HepG2 (cell line): ENCODE measurements at regions of chr16 and their contacts with region 1.

Region 1: DNA sequence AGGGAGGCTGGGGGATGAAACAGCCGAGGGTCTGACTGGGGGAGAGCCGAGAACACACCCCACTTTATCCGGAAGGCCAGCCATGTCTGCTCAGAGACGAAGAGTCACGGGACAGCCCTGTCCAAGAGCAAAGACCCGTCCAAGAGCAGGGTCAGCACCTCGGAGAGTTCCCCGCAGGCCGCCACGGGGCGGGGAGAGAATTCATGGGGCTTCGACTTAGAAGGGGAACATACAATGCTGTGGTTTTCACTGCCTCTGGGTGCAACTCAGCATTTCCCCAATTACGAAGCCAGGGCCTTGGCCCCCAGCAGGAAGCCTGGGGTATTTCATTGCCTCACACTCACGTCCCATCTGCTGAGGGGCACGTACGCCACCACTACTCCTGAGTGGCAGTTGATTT is 59.3 kb downstream of the JPH3 start:
- DNase-seq: peak; percentile 44
- ATAC-seq: peak; percentile 76
- H3K4me3 ChIP-seq: no peak overlapping the region
- H3K27ac ChIP-seq: no peak overlapping the region
- H3K4me1 ChIP-seq: no peaks in the 10 kb centered on the region
- H3K27me3 ChIP-seq: peaks cover 14 to 84% of the 10 kb centered on the region in 2 experiments
- CTCF ChIP-seq: no peak
- EP300 ChIP-seq: no peak
- POLR2A ChIP-seq: no peak
- RAD21 ChIP-seq: no peak

Region 2: GRCh38 chr16:87608400-87608985 is 53.1 kb before region 1 on chr16:
- CTCF ChIA-PET with region 1: no interaction called
- POLR2A ChIA-PET with region 1: no interaction called
- in situ Hi-C with region 1: no loop called
- intact Hi-C with region 1: loop called (anchors 10 kb)
- DNase-seq: peak; percentile 48
- ATAC-seq: peak; percentile 74
- H3K4me3 ChIP-seq: no peak overlapping the region
- H3K27ac ChIP-seq: no peak overlapping the region
- H3K4me1 ChIP-seq: no peaks in the 10 kb centered on the region
- H3K27me3 ChIP-seq: peaks cover 16 to 73% of the 10 kb centered on the region in 2 experiments
- CTCF ChIP-seq: no peak
- EP300 ChIP-seq: no peak
- POLR2A ChIP-seq: no peak
- RAD21 ChIP-seq: no peak

Region 3: DNA sequence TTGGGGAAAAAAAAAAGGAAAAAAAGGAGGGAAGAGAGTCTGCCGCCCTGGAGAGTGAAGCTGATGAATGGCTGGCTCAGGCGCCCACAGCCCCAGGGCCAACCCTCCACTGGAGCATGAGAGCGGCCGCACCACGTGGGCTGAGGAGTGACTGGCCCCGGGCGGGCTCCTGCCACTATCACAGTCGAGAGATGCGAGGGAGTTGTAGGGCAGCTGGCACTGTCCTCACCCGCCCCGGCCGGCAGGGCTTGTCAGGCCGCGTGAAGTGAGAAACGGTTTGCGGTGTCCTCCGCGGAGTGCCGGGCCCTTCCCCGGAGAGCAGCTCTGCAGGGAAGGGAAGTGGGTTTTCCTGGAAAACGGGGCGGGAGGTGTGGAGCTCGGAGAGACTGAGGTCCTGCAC is 13.3 kb before region 1 on chr16:
- CTCF ChIA-PET with region 1: no interaction called
- POLR2A ChIA-PET with region 1: no interaction called
- in situ Hi-C with region 1: no loop called
- intact Hi-C with region 1: no loop called
- DNase-seq: no peak
- ATAC-seq: peak; percentile 16
- H3K4me3 ChIP-seq: no peak overlapping the region
- H3K27ac ChIP-seq: no peak overlapping the region
- H3K4me1 ChIP-seq: no peaks in the 10 kb centered on the region
- H3K27me3 ChIP-seq: peaks cover 30 to 79% of the 10 kb centered on the region in 2 experiments
- CTCF ChIP-seq: no peak
- EP300 ChIP-seq: no peak
- POLR2A ChIP-seq: no peak
- RAD21 ChIP-seq: no peak

Region 4: GRCh38 chr16:87681981-87682570 is 20.5 kb after region 1 on chr16:
- CTCF ChIA-PET with region 1: no interaction called
- POLR2A ChIA-PET with region 1: no interaction called
- in situ Hi-C with region 1: no loop called
- intact Hi-C with region 1: no loop called
- DNase-seq: peak; percentile 42
- ATAC-seq: peak; percentile 66
- H3K4me3 ChIP-seq: no peak overlapping the region
- H3K27ac ChIP-seq: no peak overlapping the region
- H3K4me1 ChIP-seq: peaks cover 6% of the 10 kb centered on the region
- H3K27me3 ChIP-seq: peaks cover 18 to 82% of the 10 kb centered on the region in 2 experiments
- CTCF ChIP-seq: peak; percentile 47
- EP300 ChIP-seq: no peak
- POLR2A ChIP-seq: no peak
- RAD21 ChIP-seq: no peak

Region 5: DNA sequence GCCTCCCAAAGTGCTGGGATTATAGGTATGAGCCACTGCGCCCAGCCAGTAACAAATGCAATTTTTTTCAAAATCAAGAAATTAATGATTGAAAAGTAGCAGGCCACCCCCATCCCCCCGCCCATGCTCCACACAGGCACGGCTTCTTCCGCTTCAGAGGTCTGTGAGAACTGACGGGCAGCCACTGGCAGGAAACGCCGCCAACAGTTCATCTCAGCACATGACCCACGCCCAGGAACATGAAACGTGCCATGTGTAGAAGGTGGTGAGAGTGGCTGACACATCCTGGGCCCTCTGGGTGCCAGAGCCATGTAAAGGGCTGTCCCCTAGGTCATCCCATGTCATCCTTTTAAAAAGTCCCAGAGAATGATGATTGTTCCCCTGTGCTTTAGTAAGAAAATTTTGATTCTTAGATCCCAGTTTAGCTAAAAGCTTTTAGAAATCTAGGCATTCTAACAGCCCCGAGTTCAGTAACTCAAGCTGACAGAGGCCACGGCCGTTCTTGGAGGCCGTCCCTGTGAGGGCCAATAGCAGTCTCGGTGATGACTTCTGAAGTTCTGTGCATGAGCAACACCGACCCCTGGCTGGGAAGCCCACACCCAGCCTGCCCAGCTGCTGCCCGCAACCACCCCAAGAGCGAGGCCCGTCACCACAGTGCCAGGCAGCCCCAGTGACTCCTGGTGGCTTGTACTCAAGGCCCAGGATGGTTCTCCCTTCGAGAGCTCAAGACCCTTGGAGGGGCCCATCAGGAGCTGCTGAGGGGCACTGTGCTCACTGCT is 52.1 kb after region 1 on chr16:
- CTCF ChIA-PET with region 1: no interaction called
- POLR2A ChIA-PET with region 1: no interaction called
- in situ Hi-C with region 1: no loop called
- intact Hi-C with region 1: no loop called
- DNase-seq: no peak
- ATAC-seq: no peak
- H3K4me3 ChIP-seq: no peak overlapping the region
- H3K27ac ChIP-seq: no peak overlapping the region
- H3K4me1 ChIP-seq: no peaks in the 10 kb centered on the region
- H3K27me3 ChIP-seq: no peaks in the 10 kb centered on the region
- CTCF ChIP-seq: no peak
- EP300 ChIP-seq: no peak
- POLR2A ChIP-seq: no peak
- RAD21 ChIP-seq: no peak

Region 6: DNA sequence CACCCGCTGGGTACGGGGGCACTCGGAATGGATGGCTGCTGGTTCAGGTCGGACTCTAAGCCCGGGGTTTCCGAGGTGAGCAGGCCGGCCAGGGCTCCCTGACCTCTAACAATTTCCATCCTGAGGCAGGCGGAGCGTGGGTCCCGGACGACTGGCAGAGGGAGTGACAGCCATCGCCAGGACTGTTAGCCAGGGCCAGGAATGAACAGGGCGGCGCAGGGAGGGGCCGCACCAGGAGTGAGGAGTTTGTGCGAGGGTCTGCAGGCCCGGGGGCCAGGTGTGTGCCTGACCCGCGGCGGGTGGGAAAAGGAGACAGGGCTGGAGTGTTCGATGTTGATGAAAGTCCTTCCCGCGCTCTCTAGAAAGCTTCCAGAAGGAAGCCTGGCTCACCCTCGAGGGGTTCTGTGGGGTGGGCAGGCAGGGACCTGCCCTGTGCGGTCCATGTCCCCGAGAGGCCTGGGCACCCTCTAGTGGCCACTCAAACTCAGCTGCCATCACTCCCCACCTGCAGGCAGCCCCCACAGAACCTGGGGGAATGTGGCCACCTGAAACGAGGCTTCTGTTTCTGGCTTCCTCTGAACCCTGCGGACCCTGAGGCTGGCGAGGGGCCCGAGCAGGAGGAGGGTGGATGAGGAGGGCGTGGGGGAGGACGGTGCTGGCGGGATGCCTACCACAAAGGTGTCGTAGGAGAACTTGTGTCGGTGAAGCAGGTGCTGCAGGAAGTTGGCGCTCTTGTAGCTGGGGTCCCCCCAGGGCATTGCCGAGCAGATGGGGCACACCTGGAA is 1036.5 kb after region 1 on chr16:
- CTCF ChIA-PET with region 1: no interaction called
- POLR2A ChIA-PET with region 1: no interaction called
- in situ Hi-C with region 1: no loop called
- intact Hi-C with region 1: no loop called
- DNase-seq: no peak
- ATAC-seq: peak; percentile 12; the same call in 2 of the 3 replicates
- H3K4me3 ChIP-seq: no peak overlapping the region
- H3K27ac ChIP-seq: no peak overlapping the region
- H3K4me1 ChIP-seq: peaks cover 42% of the 10 kb centered on the region
- H3K27me3 ChIP-seq: peaks cover 8 to 16% of the 10 kb centered on the region in 2 experiments; a peak in 3 of 5 replicates
- CTCF ChIP-seq: peak; percentile 75
- EP300 ChIP-seq: no peak
- POLR2A ChIP-seq: no peak
- RAD21 ChIP-seq: peak; percentile 62